Naive thymus-derived CD8-positive, alpha-beta T cell (primary cell): ENCODE measurements at regions of chr2 and their contacts with region 1.

Region 1: GRCh38 chr2:86808315-86809161 is 17.8 kb upstream of the CD8A start:
- DNase-seq: peak; percentile 93 to 98 (median 96)
- ATAC-seq: peak; percentile 70 to 76
- H3K4me3 Mint-ChIP-seq: peak overlapping the region; percentile 86 to 100 (median 98)
- H3K27ac Mint-ChIP-seq: peak overlapping the region; percentile 93 to 100 (median 98)
- H3K4me1 Mint-ChIP-seq: peaks cover 33 to 75% (median 65%) of the 10 kb centered on the region in 4 donors
- H3K27me3 Mint-ChIP-seq: peaks cover 0 to 14% (median 0%) of the 10 kb centered on the region in 5 donors

Region 2: GRCh38 chr2:86686905-86687304 is 121.6 kb before region 1 on chr2:
- POLR2A ChIA-PET with region 1: no interaction called
- DNase-seq: no peak
- ATAC-seq: no peak
- H3K4me3 Mint-ChIP-seq: no peak overlapping the region
- H3K27ac Mint-ChIP-seq: no peak overlapping the region
- H3K4me1 Mint-ChIP-seq: no peaks in the 10 kb centered on the region
- H3K27me3 Mint-ChIP-seq: no peaks in the 10 kb centered on the region

Region 3: DNA sequence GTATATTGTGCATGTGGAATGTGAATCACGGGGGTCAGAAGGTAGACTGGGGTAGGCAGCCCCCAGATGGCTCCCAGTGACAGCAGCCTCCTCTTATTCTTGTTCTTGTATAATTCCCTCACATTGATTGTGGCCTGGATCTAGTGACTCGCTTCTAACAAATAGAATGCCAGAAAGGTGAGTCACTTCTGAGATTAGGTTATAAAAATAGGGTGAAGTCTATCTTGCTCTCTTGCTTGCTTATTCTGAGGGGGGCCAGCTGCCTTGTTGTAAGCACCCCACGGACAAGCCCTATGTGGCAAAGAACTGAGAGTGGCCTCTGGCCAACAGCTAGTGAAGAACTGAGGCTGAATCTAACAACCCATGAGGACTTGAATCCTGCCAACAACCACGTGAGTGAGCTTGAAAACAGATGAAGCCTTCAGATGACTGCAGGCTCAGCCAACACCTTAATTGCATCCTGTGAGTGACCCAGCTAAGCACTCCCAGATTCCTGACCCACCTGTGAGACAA is 104.0 kb before region 1 on chr2:
- POLR2A ChIA-PET with region 1: no interaction called
- DNase-seq: no peak
- ATAC-seq: no peak
- H3K4me3 Mint-ChIP-seq: no peak overlapping the region
- H3K27ac Mint-ChIP-seq: no peak overlapping the region
- H3K4me1 Mint-ChIP-seq: no peaks in the 10 kb centered on the region
- H3K27me3 Mint-ChIP-seq: no peaks in the 10 kb centered on the region

Region 4: GRCh38 chr2:86747711-86748639 is 60.6 kb before region 1 on chr2:
- POLR2A ChIA-PET with region 1: no interaction called
- DNase-seq: no peak
- ATAC-seq: no peak
- H3K4me3 Mint-ChIP-seq: no peak overlapping the region
- H3K27ac Mint-ChIP-seq: peak overlapping the region in 3 of 10 donors; percentile 15 to 37 (median 37)
- H3K4me1 Mint-ChIP-seq: peaks cover 27 to 67% (median 54%) of the 10 kb centered on the region in 4 donors
- H3K27me3 Mint-ChIP-seq: no peaks in the 10 kb centered on the region

Region 5: DNA sequence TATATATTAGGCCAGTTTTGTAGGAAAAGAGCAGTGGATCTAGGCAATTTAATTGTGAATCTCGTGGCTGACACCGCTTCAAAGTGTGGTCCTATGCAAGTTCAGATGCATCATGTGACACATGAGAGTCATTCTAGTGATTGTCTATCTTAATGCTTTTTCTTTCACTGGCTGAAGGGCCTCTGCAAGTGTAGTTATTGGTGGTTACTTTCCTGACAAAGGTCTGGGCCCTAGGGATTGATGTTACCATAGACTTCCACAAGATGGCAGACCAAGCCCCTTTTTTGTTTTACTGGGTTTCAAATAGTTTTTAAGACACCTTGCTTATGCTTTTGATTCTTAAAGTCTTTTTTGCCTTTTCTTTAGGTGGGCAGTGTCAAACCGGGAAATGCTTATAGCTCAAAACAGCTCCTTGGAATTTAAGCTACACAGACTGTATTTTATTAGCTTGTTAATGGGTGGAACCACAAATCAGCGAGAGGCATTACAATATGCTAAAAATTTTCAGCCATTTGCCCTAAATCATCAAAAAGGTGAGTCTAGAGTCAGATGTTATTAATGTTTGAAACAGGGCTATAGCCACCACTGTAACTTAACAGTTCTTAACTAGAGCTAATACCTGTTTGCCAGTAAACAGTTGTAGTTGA is 43.8 kb before region 1 on chr2:
- POLR2A ChIA-PET with region 1: interaction called, 49 read pairs
- DNase-seq: peak in 9 of 10 donors; percentile 37 to 77 (median 63)
- ATAC-seq: peak; percentile 74 to 75
- H3K4me3 Mint-ChIP-seq: peak overlapping the region in 4 of 10 donors; percentile 11 to 31 (median 19)
- H3K27ac Mint-ChIP-seq: peak overlapping the region; percentile 20 to 90 (median 82)
- H3K4me1 Mint-ChIP-seq: peaks cover 20 to 50% (median 28%) of the 10 kb centered on the region in 4 donors
- H3K27me3 Mint-ChIP-seq: no peaks in the 10 kb centered on the region

Region 6: DNA sequence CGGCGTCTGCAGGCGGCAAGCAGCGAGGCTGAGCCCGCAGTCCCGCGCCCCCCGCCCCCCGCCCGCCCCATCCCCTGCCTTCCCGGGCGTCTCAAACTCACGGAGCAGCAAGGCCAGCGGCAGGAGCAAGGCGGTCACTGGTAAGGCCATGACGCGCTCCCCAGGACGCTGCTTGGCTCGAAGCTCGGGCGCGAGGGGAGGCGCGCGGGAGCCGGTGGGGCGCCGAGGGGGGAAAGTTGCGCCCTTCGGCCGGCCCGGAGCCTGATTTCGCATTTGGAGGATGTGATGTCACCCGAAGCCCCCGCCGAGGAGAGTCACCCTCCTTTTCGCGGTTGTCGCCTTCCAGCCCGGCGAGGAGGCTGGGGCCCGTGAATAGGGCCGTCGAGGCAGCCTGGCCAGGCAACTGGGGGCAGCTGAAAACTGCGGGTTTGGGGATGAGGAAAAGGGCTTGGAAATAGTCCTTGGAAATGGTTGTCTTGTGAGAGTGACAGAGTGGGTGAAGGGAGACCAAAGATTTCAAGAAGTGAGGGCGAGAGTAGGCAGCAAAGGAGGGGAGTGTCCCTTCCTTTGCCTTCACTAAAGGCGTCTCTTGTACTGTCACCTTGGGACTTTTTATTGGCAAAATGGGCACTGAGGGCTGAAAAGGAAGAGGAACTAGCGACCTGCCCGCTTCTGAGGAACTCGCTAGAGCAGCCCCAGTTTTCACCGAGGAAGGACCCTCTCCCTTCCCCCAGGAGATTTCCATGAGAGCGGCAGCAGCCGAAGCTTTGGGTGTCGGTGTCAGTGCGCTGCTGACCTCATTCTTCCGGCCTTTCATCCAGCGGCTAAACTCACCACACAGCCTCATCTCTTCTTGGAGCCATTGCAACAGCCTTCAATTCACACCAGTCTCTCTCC is 17.6 kb before region 1 on chr2 and contains the start of gene CD8A:
- POLR2A ChIA-PET with region 1: interaction called, 668 read pairs
- DNase-seq: peak; percentile 65 to 92 (median 80)
- ATAC-seq: peak; percentile 25 to 32
- H3K4me3 Mint-ChIP-seq: peak within 1 kb of the TSS; percentile 90 to 99 (median 96)
- H3K27ac Mint-ChIP-seq: peak within 1 kb of the TSS; percentile 96 to 100 (median 100)
- H3K4me1 Mint-ChIP-seq: peaks cover 53 to 83% (median 73%) of the 10 kb centered on the region in 4 donors
- H3K27me3 Mint-ChIP-seq: peaks cover 0 to 14% (median 0%) of the 10 kb centered on the region in 5 donors
- polyA plus RNA-seq, gene CD8A: 885 to 1,018 (median 934) TPM

Region 7: GRCh38 chr2:86831537-86831936 is 23.0 kb after region 1 on chr2:
- POLR2A ChIA-PET with region 1: interaction called, 362 read pairs
- DNase-seq: no peak
- ATAC-seq: no peak
- H3K4me3 Mint-ChIP-seq: peak overlapping the region; percentile 53 to 87 (median 80)
- H3K27ac Mint-ChIP-seq: peak overlapping the region; percentile 84 to 100 (median 96)
- H3K4me1 Mint-ChIP-seq: peaks cover 37 to 82% (median 77%) of the 10 kb centered on the region in 4 donors
- H3K27me3 Mint-ChIP-seq: no peaks in the 10 kb centered on the region